Panc1 (cell line): ENCODE measurements at regions of chrX and their contacts with region 1.

Region 1: DNA sequence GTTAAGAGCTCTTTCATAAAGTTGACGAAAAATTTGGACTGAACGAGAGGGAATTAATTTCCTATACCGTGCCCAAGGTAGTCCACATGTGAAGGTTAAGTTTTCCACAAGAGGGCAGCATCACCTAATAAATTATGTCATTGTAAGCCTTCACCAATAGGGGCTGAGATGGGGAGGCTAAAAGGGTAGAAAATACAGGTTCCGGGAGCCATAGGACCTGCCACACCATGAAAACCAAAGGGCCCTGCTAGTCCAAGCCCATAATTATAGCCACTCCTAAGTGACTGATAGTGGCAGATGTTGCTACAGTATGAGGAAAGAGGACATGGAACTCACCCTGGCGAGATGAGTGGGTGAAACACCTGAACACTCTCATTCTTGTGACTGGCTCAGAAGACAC is 122.2 kb downstream of the SHROOM4 start:
- DNase-seq: peak; percentile 24
- ATAC-seq: peak; percentile 80
- H3K4me3 ChIP-seq: no peak overlapping the region
- H3K27ac ChIP-seq: no peak overlapping the region
- H3K4me1 ChIP-seq: no peaks in the 10 kb centered on the region
- H3K27me3 ChIP-seq: no peaks in the 10 kb centered on the region
- CTCF ChIP-seq: peak; percentile 62

Region 2: DNA sequence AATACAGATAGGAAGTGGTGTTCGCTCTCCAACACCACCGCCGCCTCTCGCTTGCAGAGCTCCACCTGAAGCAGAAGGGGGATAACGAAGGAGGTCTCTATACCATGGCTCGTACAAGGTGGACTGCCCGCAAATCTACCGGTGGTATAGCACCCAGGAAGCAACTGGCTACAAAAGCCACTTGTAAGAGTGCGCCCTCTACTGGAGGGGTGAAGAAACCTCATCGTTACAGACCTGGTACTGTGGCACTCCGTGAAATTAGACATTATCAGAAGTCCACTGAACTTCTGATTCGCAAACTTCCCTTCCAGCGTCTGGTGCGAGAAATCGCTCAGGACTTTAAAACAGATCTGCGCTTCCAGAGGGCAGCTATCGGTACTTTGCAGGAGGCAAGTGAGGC is 213.5 kb after region 1 on chrX:
- CTCF ChIA-PET with region 1: no interaction called
- POLR2A ChIA-PET with region 1: no interaction called
- in situ Hi-C with region 1: no loop called
- intact Hi-C with region 1: loop called (anchors 5 kb)
- DNase-seq: no peak
- ATAC-seq: no peak
- H3K4me3 ChIP-seq: no peak overlapping the region
- H3K27ac ChIP-seq: no peak overlapping the region
- H3K4me1 ChIP-seq: no peaks in the 10 kb centered on the region
- H3K27me3 ChIP-seq: no peaks in the 10 kb centered on the region
- CTCF ChIP-seq: peak; percentile 52

Region 3: GRCh38 chrX:50988649-50989048 is 296.8 kb after region 1 on chrX:
- CTCF ChIA-PET with region 1: no interaction called
- POLR2A ChIA-PET with region 1: no interaction called
- in situ Hi-C with region 1: no loop called
- intact Hi-C with region 1: loop called (anchors 10 kb)
- DNase-seq: peak; percentile 13
- ATAC-seq: no peak
- H3K4me3 ChIP-seq: no peak overlapping the region
- H3K27ac ChIP-seq: no peak overlapping the region
- H3K4me1 ChIP-seq: no peaks in the 10 kb centered on the region
- H3K27me3 ChIP-seq: no peaks in the 10 kb centered on the region
- CTCF ChIP-seq: peak; percentile 71

Region 4: DNA sequence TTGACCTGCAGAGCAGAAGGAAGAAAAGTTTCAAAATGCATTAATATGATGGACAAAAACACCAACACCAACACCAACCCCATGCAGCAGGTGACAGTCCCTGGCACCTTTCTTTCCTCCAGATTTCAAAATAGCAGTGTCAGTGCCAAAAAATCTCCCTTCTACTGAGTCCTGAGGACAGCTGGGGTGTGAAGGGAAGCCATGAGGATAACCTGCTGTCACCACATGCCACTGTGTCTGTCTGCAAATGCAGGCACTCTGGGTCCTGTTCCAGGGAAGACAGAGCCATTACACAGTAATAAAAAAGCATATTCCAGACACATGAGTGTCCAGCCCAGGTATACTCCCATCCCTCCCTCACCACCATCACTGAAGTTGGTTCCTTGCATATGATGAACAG is 406.2 kb after region 1 on chrX:
- CTCF ChIA-PET with region 1: interaction called, 12 read pairs
- POLR2A ChIA-PET with region 1: no interaction called
- in situ Hi-C with region 1: no loop called
- intact Hi-C with region 1: no loop called
- DNase-seq: no peak
- ATAC-seq: no peak
- H3K4me3 ChIP-seq: no peak overlapping the region
- H3K27ac ChIP-seq: no peak overlapping the region
- H3K4me1 ChIP-seq: no peaks in the 10 kb centered on the region
- H3K27me3 ChIP-seq: no peaks in the 10 kb centered on the region
- CTCF ChIP-seq: no peak

Region 5: DNA sequence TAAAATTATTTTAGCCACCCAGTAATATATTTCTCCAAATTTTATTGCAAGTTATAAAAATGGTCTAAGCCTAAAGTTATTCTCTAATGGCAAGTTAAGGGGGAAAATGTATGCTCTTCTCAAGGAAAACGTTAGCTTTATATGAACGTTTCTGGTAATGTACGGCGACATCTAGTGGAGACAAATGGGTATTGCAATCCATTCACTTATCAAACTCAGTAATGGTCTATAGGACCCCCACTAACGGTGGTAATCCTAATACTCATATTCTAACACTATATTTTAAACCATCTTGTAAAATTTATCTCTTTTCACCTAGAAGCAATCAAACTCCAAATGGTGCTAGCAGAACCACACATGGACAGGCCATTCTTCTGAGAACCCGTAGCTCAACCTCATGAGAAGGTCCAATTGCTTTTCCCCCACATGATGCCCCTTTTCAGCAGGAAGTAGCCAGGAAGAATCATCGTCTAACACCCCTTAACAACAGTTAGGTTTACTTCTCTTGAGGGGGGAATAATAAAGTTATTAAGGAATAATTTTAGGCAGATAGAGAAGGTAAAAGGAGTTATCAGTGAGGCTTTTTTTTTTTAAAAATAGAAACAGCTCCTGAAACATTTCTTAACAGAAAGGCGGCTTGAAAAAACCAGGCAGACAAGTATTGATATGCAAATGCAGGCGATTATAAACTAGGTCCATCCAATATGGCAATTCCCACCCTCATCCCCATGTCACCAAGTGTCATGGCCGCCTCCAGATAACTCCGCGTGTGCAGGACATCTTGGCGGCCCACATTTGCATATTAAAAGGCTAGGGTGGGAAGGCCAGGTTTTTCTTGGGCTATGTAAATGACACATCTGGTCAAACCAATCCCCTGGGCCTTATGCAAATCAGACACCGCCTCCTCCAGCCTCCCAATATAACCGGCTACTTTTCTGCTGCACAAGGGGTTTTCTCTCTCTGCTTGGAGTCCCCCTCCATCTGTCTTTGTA is 769.5 kb after region 1 on chrX:
- CTCF ChIA-PET with region 1: no interaction called
- POLR2A ChIA-PET with region 1: no interaction called
- in situ Hi-C with region 1: no loop called
- intact Hi-C with region 1: loop called (anchors 5 kb)
- DNase-seq: peak; percentile 47
- ATAC-seq: no peak
- H3K4me3 ChIP-seq: no peak overlapping the region
- H3K27ac ChIP-seq: no peak overlapping the region
- H3K4me1 ChIP-seq: no peaks in the 10 kb centered on the region
- H3K27me3 ChIP-seq: no peaks in the 10 kb centered on the region
- CTCF ChIP-seq: peak; percentile 77